ENCODE measurements at regions of chr1 and their contacts with region 1.

Region 1: DNA sequence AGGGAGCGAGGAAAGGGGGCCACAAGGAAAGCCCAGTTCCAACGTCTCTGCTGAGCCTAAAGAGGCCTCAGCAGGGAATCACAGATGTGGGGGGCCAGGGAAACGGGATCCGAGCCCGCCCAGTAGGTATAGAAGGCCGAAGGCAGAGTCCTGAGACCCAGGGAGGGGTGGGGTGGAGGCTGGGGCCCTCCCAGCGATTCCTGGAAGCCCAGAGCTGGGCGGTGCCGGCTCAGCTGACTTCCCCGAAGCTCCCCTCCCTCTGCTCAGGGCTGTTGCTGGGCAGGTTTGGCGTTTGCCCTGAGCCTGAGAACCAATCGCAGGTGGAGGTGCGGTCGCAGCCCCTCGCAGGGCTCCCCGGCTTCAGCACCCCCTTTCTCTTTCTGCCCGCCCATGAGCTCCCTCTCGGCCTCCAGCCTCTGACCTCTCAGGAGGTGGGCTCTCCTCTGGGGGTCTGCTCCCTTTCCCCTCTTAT is 12.8 kb downstream of the ADAMTSL4 start:
- DNase-seq: peak; percentile 96
- ATAC-seq: peak; percentile 84

Region 2: GRCh38 chr1:150529017-150529416 is 33.0 kb before region 1 on chr1:
- intact Hi-C with region 1: no loop called
- DNase-seq: no peak
- ATAC-seq: peak in 1 of 2 donors; percentile 49

Region 3: GRCh38 chr1:150578965-150579798 is 17.2 kb after region 1 on chr1 and contains the start of gene MCL1:
- intact Hi-C with region 1: loop called in 1 of 2 experiments (anchors 1 kb)
- DNase-seq: peak; percentile 95
- ATAC-seq: peak; percentile 94
- total RNA-seq, gene MCL1: 103 to 146 TPM

Region 4: GRCh38 chr1:150621497-150622302 is 59.7 kb after region 1 on chr1:
- intact Hi-C with region 1: loop called (anchors 2 kb)
- DNase-seq: peak; percentile 53
- ATAC-seq: peak in 1 of 2 donors; percentile 7

Region 5: GRCh38 chr1:150813058-150813707 is 251.2 kb after region 1 on chr1:
- intact Hi-C with region 1: loop called in 1 of 2 experiments (anchors 10 kb)
- DNase-seq: peak; percentile 47
- ATAC-seq: peak; percentile 71 to 80

Measured in left cardiac atrium (tissue), 4 donors.